Activated CD8-positive, alpha-beta T cell treated with anti-CD3 and anti-CD28 coated beads for 36 hours (primary cell): ENCODE measurements at regions of chr2 and their contacts with region 1.

Region 1: GRCh38 chr2:148644883-148645538 is 460 bp downstream of the EPC2 start:
- DNase-seq: peak; percentile 93
- ATAC-seq: peak; percentile 83
- H3K4me3 Mint-ChIP-seq: peak overlapping the region; percentile 84
- H3K27ac Mint-ChIP-seq: peak overlapping the region; percentile 93
- H3K4me1 Mint-ChIP-seq: peaks cover 39% of the 10 kb centered on the region
- H3K27me3 Mint-ChIP-seq: peaks cover 5% of the 10 kb centered on the region
- CTCF ChIP-seq: no peak

Region 2: GRCh38 chr2:148020111-148021058 is 624.6 kb before region 1 on chr2 and contains the start of gene ORC4:
- CTCF ChIA-PET with region 1: no interaction called
- POLR2A ChIA-PET with region 1: no interaction called
- intact Hi-C with region 1: loop called (anchors 10 kb)
- DNase-seq: peak; percentile 99
- ATAC-seq: peak; percentile 88
- H3K4me3 Mint-ChIP-seq: peak within 1 kb of the TSS; percentile 90
- H3K27ac Mint-ChIP-seq: peak within 1 kb of the TSS; percentile 95
- H3K4me1 Mint-ChIP-seq: peaks cover 48% of the 10 kb centered on the region
- H3K27me3 Mint-ChIP-seq: no peaks in the 10 kb centered on the region
- CTCF ChIP-seq: no peak
- total RNA-seq, gene ORC4: 31.1 to 33.0 TPM

Region 3: GRCh38 chr2:148874868-148875341 is 229.9 kb after region 1 on chr2 and contains the start of gene KIF5C:
- CTCF ChIA-PET with region 1: no interaction called
- POLR2A ChIA-PET with region 1: no interaction called
- intact Hi-C with region 1: loop called (anchors 10 kb)
- DNase-seq: peak; percentile 95
- ATAC-seq: peak; percentile 90
- H3K4me3 Mint-ChIP-seq: peak within 1 kb of the TSS; percentile 82
- H3K27ac Mint-ChIP-seq: peak within 1 kb of the TSS; percentile 66
- H3K4me1 Mint-ChIP-seq: peaks cover 10% of the 10 kb centered on the region
- H3K27me3 Mint-ChIP-seq: peaks cover 23% of the 10 kb centered on the region
- CTCF ChIP-seq: no peak
- total RNA-seq, gene KIF5C: 10.2 to 11.1 TPM